ENCODE measurements at regions of chr2 and their contacts with region 1.

Region 1: DNA sequence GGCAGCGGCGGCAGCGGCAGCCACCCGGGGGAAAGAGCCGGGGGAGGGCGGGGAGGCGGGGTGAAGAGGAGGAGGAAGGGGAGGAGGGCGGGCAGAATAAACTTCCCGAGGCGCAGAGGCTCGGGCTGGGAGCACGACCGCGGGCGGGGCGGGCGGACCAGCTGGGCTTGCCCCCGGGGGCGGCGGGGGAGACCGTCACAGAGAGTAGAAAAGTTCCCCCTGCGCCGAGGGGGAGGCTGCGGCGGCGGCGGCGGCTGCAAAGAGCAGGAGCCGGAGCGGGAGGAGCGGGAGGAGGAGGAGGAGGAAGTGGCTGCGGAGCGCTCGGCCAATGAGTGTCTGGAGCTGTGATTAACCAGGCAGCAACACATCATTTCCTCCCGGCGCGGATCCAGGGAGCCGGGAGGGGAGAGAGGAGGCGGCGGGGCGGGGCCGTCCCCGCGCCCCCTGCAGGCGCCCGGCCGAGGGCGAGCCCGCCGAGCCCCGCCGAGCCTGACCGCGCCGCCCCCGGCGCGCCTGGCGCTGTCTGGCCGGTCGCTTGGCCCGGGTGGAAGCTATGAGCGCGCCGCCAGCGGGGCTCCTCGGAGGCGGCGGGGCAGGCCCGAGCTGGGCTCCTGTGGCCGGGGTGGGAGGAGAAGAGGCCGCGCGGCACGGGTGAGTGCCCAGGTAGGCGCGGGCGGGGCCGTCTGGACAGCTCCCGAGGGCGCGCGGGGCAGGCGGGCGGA is at the start of gene ACVR1:
- DNase-seq: peak; percentile 93
- ATAC-seq: peak; percentile 90
- H3K4me3 Mint-ChIP-seq: peak within 1 kb of the TSS; percentile 89
- H3K27ac Mint-ChIP-seq: peak within 1 kb of the TSS; percentile 91
- H3K4me1 Mint-ChIP-seq: peaks cover 55% of the 10 kb centered on the region
- H3K27me3 Mint-ChIP-seq: no peaks in the 10 kb centered on the region
- total RNA-seq, gene ACVR1: 17.1 to 23.0 TPM

Region 2: DNA sequence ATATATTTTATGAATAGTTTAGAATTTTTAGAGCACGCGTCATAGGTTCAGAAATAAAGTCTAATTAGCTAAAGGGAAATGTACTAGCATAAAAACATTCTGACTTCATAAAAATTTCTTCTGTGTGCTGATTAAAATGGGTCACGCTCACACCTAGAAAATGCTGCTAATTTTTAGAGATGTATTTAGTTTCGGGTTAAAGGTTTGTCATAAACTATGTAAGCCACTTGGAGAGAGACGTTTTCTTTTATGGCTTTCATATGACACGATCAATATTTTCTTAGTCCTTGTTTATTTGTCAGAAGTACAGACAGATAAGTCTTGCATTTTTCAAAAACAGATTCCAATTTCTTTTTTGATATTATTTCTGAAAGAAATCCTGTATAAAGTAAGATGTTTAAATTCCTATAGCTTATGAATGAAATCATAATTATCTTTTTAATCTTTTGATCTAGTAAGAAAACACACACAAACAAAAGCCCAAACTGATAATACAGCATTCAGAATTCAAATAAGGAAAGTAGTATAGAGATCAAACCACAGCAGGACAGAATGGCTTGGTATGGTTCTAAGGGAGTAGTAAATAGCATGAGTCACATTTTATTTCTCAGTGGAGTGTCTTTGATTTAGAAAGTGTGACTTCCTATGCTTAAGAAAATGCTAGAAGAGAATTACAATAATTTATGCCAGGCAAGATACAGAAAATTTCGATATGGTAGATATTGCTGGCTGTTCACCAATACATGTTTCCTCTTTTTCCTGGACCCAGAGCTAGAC is 1203.5 kb before region 1 on chr2:
- CTCF ChIA-PET with region 1: no interaction called
- POLR2A ChIA-PET with region 1: no interaction called
- intact Hi-C with region 1: no loop called
- DNase-seq: no peak
- ATAC-seq: no peak
- H3K4me3 Mint-ChIP-seq: no peak overlapping the region
- H3K27ac Mint-ChIP-seq: no peak overlapping the region
- H3K4me1 Mint-ChIP-seq: no peaks in the 10 kb centered on the region
- H3K27me3 Mint-ChIP-seq: peaks cover 2% of the 10 kb centered on the region

Region 3: GRCh38 chr2:157557770-157558169 is 318.5 kb before region 1 on chr2:
- CTCF ChIA-PET with region 1: no interaction called
- POLR2A ChIA-PET with region 1: no interaction called
- intact Hi-C with region 1: no loop called
- DNase-seq: no peak
- ATAC-seq: no peak
- H3K4me3 Mint-ChIP-seq: no peak overlapping the region
- H3K27ac Mint-ChIP-seq: no peak overlapping the region
- H3K4me1 Mint-ChIP-seq: peaks cover 24% of the 10 kb centered on the region
- H3K27me3 Mint-ChIP-seq: no peaks in the 10 kb centered on the region

Region 4: GRCh38 chr2:157628477-157629415 is 247.5 kb before region 1 on chr2 and contains the start of gene ACVR1C:
- CTCF ChIA-PET with region 1: no interaction called
- POLR2A ChIA-PET with region 1: no interaction called
- intact Hi-C with region 1: loop called in 1 of 2 experiments (anchors 1 kb)
- DNase-seq: peak; percentile 80
- ATAC-seq: peak; percentile 82
- H3K4me3 Mint-ChIP-seq: peak within 1 kb of the TSS; percentile 76
- H3K27ac Mint-ChIP-seq: peak within 1 kb of the TSS; percentile 23
- H3K4me1 Mint-ChIP-seq: peaks cover 34% of the 10 kb centered on the region
- H3K27me3 Mint-ChIP-seq: peaks cover 5% of the 10 kb centered on the region
- total RNA-seq, gene ACVR1C: 1.6 to 1.7 TPM

Region 5: DNA sequence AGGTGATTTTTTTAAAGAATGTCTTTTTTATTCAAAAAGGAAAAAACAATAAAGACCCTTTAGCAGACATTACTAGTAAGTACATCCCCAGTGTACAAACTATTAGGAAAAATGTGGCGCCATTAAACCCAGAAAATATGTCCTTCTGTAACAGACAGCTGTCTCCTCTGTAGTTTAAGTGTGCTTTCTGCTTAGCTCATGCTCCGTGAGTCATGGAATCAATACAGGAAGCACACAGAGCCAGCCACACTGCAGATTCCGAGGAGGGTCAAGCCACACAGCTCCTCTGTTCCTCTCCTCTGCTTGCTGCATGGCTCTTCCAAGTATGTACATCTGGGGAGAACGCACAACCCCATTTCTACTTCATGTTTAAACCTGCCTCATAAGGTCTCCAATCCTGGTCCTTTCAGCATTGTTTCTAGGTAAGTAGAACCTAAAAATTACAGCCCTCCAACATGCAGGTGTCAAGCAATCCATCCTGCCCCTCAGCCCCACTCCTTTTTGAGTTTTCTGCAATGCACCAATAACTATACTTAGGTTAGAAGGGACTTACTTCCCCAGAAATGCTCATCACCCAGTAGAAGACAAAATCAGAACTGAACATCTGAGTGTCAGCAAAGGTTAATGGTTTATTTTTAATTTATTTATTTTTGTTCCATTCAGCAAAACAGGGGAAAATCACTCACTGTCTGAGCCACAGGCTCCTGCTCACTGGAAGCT is 37.6 kb before region 1 on chr2:
- CTCF ChIA-PET with region 1: no interaction called
- POLR2A ChIA-PET with region 1: interaction called, 3 read pairs
- intact Hi-C with region 1: loop called (anchors 2 to 5 kb)
- DNase-seq: peak; percentile 55
- ATAC-seq: peak; percentile 95
- H3K4me3 Mint-ChIP-seq: no peak overlapping the region
- H3K27ac Mint-ChIP-seq: peak overlapping the region; percentile 78
- H3K4me1 Mint-ChIP-seq: peaks cover 40% of the 10 kb centered on the region
- H3K27me3 Mint-ChIP-seq: no peaks in the 10 kb centered on the region

Region 6: DNA sequence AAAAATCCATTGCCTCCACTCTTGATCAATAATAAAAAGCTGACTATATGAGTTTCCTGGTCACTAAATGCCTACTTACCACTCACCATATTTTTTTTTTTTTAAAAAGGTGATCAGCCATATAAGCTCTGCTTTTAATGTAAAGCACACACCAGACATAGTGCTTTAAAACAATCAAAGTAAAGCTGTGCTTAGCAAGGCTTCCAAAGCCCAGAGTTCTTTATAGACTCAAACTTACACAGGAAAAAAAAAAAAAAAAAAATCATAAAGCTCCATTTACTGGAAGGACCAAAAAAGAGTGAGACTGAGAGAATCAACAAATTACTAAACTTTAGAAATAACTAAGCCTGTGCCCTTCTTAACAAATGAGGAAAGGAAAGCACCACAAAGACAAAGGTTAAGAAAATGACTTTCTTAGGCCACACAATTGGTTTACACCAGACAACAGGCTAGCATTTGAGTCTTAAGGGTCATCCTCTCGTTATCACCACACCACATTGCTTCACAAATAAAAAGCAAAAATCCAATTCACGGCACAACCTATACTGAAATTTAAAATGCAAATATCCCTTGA is 11.3 kb before region 1 on chr2:
- CTCF ChIA-PET with region 1: interaction called, 8 read pairs
- POLR2A ChIA-PET with region 1: interaction called, 8 read pairs
- intact Hi-C with region 1: loop called in 1 of 2 experiments (anchors 1 kb)
- DNase-seq: no peak
- ATAC-seq: peak; percentile 83
- H3K4me3 Mint-ChIP-seq: peak overlapping the region; percentile 33
- H3K27ac Mint-ChIP-seq: peak overlapping the region; percentile 83
- H3K4me1 Mint-ChIP-seq: peaks cover 43% of the 10 kb centered on the region
- H3K27me3 Mint-ChIP-seq: no peaks in the 10 kb centered on the region

Region 7: DNA sequence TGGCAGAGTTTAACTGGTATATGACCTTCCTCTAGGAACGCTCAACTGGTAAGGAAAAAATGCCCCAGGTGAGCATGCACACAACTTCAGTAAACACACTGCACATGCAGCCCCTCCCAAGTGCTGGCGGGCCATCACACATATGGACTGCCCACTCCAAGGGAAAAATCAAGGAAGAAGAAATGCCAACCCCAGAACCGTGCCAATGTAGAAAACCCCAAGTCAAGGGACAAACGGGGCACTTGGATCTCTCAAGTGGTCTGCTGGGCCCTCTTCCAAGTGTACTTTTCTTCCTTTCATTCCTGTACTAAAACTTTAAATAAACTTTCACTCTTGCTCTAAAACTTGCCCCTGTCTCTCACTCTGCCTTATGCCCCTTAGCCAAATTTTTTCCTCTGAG is 76.3 kb after region 1 on chr2:
- CTCF ChIA-PET with region 1: no interaction called
- POLR2A ChIA-PET with region 1: no interaction called
- intact Hi-C with region 1: no loop called
- DNase-seq: no peak
- ATAC-seq: no peak
- H3K4me3 Mint-ChIP-seq: no peak overlapping the region
- H3K27ac Mint-ChIP-seq: no peak overlapping the region
- H3K4me1 Mint-ChIP-seq: no peaks in the 10 kb centered on the region
- H3K27me3 Mint-ChIP-seq: no peaks in the 10 kb centered on the region

Region 8: DNA sequence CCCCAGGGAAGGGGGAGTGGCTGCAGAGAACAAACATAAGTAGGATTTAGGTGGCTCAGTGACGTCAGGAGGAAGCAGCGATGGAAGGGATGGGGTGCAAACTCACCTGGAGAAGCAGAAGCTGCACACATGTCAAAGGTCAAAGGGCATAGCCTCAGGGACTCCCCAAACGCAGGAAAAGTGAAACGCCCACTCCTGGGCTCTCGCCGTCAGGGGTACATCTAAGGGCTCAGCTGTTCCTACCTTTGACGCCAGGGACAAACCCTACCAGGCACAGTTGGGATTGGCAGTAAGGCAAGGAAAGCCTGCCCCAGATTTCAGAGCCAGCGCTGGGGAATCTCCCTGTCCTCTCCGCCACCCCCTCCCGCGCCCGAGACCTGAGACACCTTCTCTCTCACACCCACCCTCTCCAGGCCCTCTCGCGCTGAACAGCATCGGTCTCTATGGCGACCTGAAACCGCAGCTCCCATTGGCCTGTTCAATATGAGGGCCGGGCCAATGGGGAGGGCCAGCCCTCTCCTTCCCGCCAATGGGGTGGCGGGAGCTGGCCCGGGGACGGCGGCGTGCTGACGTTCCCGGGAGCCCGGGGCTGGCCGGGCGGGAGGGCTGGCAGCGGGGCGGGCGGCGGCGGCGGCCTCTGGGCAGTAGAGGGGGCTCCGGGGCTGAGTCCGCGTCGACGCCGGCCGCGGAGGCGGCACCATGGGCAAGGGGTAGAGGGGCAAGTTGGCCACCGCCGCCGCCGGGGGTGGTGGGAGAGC is 580.3 kb after region 1 on chr2 and contains the starts of genes CCDC148 and PKP4:
- CTCF ChIA-PET with region 1: no interaction called
- POLR2A ChIA-PET with region 1: no interaction called
- intact Hi-C with region 1: loop called (anchors 2 to 10 kb)
- DNase-seq: peak; percentile 95
- ATAC-seq: peak; percentile 97
- H3K4me3 Mint-ChIP-seq: peak within 1 kb of the TSS; percentile 92
- H3K27ac Mint-ChIP-seq: peak within 1 kb of the TSS; percentile 72
- H3K4me1 Mint-ChIP-seq: peaks cover 25% of the 10 kb centered on the region
- H3K27me3 Mint-ChIP-seq: peaks cover 5% of the 10 kb centered on the region
- total RNA-seq, gene CCDC148: 0.23 to 0.26 TPM
- total RNA-seq, gene PKP4: 39.2 to 58.4 TPM

Measured in activated CD4-positive, alpha-beta T cell treated with anti-CD3 and anti-CD28 coated beads for 36 hours (primary cell).